ENCODE measurements at regions of chr1 and their contacts with region 1.

Region 1: DNA sequence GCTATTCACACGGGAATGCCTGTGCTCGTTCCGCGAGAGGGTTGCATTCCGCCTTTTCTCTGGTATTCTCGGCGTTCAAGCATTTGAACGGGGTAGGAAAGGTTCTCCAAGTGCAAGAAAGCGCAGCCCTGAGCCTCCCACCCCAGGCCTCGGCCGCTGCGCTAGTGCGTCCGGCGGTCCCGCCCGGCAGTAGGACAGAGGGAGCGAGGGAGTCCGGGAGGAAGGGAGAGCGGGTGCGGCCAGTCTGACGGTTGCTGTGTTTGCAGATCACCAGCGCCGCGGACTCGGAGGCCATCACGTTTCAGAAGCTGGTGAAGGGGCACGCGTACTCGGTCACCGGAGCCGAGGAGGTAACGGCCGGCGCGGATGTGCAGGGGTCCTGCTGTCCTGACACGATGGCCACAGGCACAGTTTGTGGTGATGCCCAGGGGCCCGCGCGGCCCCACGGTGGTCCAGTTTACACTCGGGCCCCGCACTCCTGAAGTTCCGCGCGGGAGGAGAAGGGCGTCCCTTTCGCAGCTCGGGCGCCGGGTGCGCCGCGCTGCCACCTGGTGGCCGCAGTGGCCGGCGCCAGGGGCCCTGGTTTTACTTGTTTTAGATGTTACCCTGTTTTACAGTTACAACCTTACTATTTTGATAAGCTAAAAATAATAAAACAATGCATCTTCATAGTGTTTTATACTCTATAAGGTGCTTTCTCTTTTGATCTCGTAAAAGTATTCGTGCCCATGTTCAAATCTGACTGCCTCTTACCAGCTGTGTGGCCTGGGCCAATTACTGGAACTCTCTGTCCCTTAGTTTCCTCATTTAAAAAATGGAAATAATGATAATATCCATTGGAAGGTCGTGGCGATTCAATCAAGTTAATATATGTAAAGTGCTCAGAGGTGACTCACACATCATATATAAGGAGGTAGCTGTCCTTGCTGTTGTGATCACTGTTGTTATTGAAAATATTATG is 36.7 kb downstream of the CAPN2 start:
- DNase-seq: peak; percentile 54
- H3K4me3 Mint-ChIP-seq: no peak overlapping the region
- H3K27ac Mint-ChIP-seq: peak overlapping the region; percentile 32
- H3K4me1 Mint-ChIP-seq: peaks cover 12% of the 10 kb centered on the region
- H3K27me3 Mint-ChIP-seq: no peaks in the 10 kb centered on the region
- CTCF ChIP-seq: peak; percentile 99

Region 2: GRCh38 chr1:223500560-223501425 is 248.3 kb before region 1 on chr1:
- CTCF ChIA-PET with region 1: no interaction called
- POLR2A ChIA-PET with region 1: no interaction called
- intact Hi-C with region 1: no loop called
- DNase-seq: peak; percentile 100
- H3K4me3 Mint-ChIP-seq: no peak overlapping the region
- H3K27ac Mint-ChIP-seq: peak overlapping the region; percentile 78
- H3K4me1 Mint-ChIP-seq: peaks cover 30% of the 10 kb centered on the region
- H3K27me3 Mint-ChIP-seq: no peaks in the 10 kb centered on the region
- CTCF ChIP-seq: no peak

Region 3: DNA sequence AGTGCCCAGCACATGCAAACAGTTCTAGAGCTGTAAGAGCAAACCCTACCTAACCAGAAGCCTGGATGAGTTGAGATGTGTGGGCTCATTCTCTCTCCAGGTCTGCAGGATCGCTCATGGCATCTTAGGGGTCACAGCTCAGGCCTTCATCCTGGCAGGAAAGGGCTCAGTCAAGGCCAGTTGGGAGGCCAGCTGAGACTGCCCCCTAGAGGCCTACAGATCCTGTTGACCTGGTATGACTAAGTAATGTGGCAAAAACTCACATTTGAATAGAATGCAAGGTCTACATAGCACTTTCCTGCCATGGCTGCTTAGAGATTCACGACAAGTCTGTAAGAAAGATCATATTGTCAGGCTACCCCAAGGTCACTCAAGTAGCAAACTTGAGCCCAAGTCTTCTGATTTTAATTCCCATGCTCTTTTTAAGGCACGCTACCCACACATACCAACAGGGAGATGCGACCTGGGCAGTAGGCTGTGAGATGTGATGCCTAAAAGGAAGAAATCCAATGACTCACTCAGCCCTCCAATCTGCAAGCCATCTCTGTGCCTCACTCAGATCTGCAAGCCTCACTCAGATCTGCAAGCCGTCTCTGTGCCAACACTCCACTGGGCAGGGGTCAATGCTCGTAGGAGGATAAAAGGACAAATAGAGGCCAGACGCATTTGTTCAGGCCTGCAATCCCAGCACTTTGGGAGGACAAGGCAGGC is 78.4 kb before region 1 on chr1:
- CTCF ChIA-PET with region 1: no interaction called
- POLR2A ChIA-PET with region 1: no interaction called
- intact Hi-C with region 1: no loop called
- DNase-seq: peak; percentile 87
- H3K4me3 Mint-ChIP-seq: no peak overlapping the region
- H3K27ac Mint-ChIP-seq: no peak overlapping the region
- H3K4me1 Mint-ChIP-seq: peaks cover 22% of the 10 kb centered on the region
- H3K27me3 Mint-ChIP-seq: no peaks in the 10 kb centered on the region
- CTCF ChIP-seq: peak; percentile 97

Region 4: DNA sequence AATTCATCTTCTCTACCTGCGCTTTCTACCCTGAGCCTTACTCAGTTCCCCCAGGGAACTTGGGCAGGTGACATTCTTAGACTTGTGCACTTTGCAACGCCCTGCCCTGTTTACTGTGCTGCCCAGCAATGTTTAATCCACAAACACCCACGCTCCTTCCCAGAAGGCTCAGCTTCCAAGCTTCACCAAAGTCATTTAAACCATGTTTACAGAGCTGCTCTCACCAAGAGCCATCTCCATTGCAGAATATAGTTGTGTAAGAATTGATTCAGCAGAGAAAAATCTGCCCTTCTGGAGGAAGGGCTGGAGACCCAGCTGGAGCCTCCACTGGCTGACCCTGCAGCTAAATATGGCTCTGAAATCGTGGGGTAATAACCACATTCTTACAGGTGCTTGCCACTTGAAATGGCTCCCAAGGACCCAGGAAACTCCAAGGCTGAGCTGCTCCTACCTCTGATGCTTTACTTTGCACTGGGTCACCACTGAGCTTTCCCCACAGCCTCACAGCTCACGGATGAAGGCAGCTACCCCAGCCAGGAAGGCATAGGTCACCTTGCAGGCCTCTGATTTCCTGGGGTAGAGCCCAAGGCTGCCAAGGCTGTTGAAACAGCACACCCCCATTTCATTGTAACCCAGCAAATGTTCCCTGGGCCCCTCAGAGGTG is 28.0 kb before region 1 on chr1:
- CTCF ChIA-PET with region 1: interaction called, 17 read pairs
- POLR2A ChIA-PET with region 1: interaction called, 4 read pairs
- intact Hi-C with region 1: no loop called
- DNase-seq: peak; percentile 97
- H3K4me3 Mint-ChIP-seq: peak overlapping the region; percentile 3
- H3K27ac Mint-ChIP-seq: peak overlapping the region; percentile 82
- H3K4me1 Mint-ChIP-seq: peaks cover 67% of the 10 kb centered on the region
- H3K27me3 Mint-ChIP-seq: no peaks in the 10 kb centered on the region
- CTCF ChIP-seq: no peak

Region 5: GRCh38 chr1:223732992-223733798 is 15.9 kb before region 1 on chr1:
- CTCF ChIA-PET with region 1: interaction called, 70 read pairs
- POLR2A ChIA-PET with region 1: interaction called, 8 read pairs
- intact Hi-C with region 1: no loop called
- DNase-seq: no peak
- H3K4me3 Mint-ChIP-seq: no peak overlapping the region
- H3K27ac Mint-ChIP-seq: peak overlapping the region; percentile 74
- H3K4me1 Mint-ChIP-seq: peaks cover 60% of the 10 kb centered on the region
- H3K27me3 Mint-ChIP-seq: no peaks in the 10 kb centered on the region
- CTCF ChIP-seq: no peak

Region 6: GRCh38 chr1:223765036-223765718 is 16.1 kb after region 1 on chr1:
- CTCF ChIA-PET with region 1: interaction called, 62 read pairs
- POLR2A ChIA-PET with region 1: interaction called, 3 read pairs
- intact Hi-C with region 1: no loop called
- DNase-seq: no peak
- H3K4me3 Mint-ChIP-seq: no peak overlapping the region
- H3K27ac Mint-ChIP-seq: peak overlapping the region; percentile 49
- H3K4me1 Mint-ChIP-seq: peaks cover 9% of the 10 kb centered on the region
- H3K27me3 Mint-ChIP-seq: no peaks in the 10 kb centered on the region
- CTCF ChIP-seq: no peak

Region 7: GRCh38 chr1:224014330-224014649 is 265.2 kb after region 1 on chr1:
- CTCF ChIA-PET with region 1: no interaction called
- POLR2A ChIA-PET with region 1: no interaction called
- intact Hi-C with region 1: no loop called
- DNase-seq: peak; percentile 3
- H3K4me3 Mint-ChIP-seq: no peak overlapping the region
- H3K27ac Mint-ChIP-seq: no peak overlapping the region
- H3K4me1 Mint-ChIP-seq: no peaks in the 10 kb centered on the region
- H3K27me3 Mint-ChIP-seq: no peaks in the 10 kb centered on the region
- CTCF ChIP-seq: no peak